ENCODE measurements at regions of chr12 and their contacts with region 1.

Region 1: DNA sequence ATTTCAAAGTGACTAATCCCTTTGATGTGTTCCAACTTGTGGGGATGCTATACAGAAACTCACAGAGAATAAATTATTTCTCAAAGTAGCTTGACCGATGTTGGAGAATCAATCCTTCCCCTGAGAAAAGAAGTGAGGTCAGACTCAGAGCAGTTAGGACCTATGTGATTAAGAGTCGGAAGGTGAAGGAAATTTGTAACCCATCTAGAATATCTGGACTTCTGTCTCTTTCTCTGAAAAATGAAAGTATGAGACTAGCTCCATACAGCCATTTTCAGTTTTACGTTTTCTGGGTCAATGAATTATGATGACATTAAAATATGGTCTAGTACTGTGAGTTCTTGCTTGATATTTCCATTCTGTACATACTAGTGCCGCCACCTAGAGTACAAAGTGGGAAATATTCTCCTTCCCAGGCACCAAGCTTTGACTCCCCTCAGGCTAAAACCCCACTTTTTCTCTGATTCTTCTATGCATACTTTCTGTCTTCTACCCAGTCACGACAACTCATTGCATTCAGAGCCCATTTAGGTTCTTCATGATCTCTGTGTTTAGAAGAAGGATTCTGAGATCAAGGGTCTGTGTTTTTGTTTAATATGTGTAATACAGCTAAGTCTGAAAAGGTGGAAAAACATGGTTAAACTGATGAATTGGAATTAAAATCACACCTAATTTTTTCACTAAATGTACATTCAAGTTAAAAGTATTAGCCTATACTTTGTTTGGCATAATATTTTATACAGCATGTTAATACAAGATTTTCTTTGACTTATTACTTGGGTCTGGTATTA is 6.9 kb upstream of the NTS start:
- DNase-seq: peak; percentile 71

Region 2: GRCh38 chr12:85484387-85484786 is 382.8 kb before region 1 on chr12:
- in situ Hi-C with region 1: loop called (anchors 25 kb)
- DNase-seq: no peak

Measured in ACHN (cell line).